ENCODE measurements at regions of chrX and their contacts with region 1.

Region 1: DNA sequence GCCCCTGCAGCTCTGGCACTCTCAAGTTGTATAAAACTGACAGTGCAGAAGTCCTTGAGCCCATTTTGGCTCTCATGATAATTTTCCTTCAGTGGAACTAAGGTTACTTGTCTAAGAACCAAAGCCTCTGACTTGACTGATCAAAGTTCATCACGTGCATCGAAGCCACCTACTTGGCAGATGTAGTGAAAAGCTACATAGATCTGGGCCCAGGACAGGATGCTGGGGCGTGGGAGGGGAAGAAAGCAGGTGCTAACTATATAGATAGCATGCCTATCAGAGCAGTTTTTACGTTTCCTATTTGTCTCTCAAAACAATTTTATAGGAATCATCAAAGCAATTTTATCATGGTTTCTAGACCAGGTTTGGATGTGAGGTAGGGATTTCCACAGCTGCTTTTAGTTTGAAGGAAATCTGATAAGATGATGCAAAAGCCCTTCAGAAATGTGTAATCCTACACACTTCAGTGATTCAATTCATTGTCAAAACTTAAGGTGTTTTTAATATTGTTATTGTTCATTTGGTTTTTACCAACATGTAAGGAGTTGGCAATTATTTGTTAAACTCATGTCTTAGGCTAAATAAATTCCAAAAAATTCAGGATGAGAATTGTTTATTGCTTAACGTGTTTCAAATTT is 1.2 kb upstream of the CD40LG start:
- DNase-seq: peak in 7 of 9 donors; percentile 49 to 76 (median 67)
- ATAC-seq: peak; percentile 88
- H3K4me3 ChIP-seq: no peak overlapping the region
- H3K4me3 Mint-ChIP-seq: peak overlapping the region; percentile 69 to 99 (median 96)
- H3K27ac ChIP-seq: peak overlapping the region; percentile 79
- H3K27ac Mint-ChIP-seq: peak overlapping the region; percentile 92 to 99 (median 95)
- H3K4me1 ChIP-seq: peaks cover 14 to 40% of the 10 kb centered on the region in 2 donors
- H3K4me1 Mint-ChIP-seq: peaks cover 23 to 53% (median 47%) of the 10 kb centered on the region in 7 donors
- H3K27me3 ChIP-seq: no peaks in the 10 kb centered on the region
- H3K27me3 Mint-ChIP-seq: no peaks in the 10 kb centered on the region

Region 2: DNA sequence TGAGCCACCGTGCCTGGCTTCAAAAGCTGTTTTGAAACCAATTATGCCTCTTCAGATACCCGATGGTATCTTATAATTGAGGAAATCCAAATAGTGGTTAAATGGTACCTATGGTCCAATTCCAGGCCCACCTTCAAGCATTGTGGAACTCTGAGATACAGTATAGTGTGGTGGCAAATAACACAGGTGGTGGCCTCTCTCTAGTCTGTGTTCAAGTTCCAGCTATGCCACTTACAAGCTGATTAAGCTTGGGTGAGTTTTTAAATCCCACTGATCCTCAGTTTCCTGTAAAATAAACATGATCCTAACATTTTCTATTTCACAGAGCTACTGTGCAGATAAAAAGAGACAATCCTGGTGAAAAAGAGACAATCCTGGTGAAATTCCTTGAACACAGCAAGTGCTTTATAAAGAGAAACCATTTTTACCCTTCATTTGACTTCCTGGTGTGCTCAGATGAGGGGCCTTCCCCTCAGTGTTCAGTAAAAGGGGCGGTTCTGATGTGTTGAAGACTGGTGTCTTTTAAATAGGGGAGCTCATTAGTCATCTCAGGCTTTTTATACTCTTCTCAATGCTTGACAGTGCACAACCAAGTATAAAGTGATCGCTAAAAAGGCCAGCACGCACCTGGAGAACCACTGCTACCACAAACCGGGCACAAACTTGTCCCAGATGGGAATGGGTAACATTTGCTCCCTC is 29.6 kb before region 1 on chrX:
- CTCF ChIA-PET with region 1: interaction called, 4 read pairs
- POLR2A ChIA-PET with region 1: interaction called, 14 read pairs
- intact Hi-C with region 1: no loop called
- DNase-seq: peak in 6 of 9 donors; percentile 22 to 60 (median 34)
- ATAC-seq: peak; percentile 85
- H3K4me3 ChIP-seq: peak overlapping the region; percentile 45
- H3K4me3 Mint-ChIP-seq: peak overlapping the region; percentile 30 to 73 (median 64)
- H3K27ac ChIP-seq: peak overlapping the region; percentile 60
- H3K27ac Mint-ChIP-seq: peak overlapping the region; percentile 63 to 93 (median 87)
- H3K4me1 ChIP-seq: peaks cover 18 to 50% of the 10 kb centered on the region in 2 donors
- H3K4me1 Mint-ChIP-seq: peaks cover 5 to 75% (median 64%) of the 10 kb centered on the region in 7 donors
- H3K27me3 ChIP-seq: no peaks in the 10 kb centered on the region
- H3K27me3 Mint-ChIP-seq: no peaks in the 10 kb centered on the region

Region 3: GRCh38 chrX:136626237-136626636 is 20.5 kb before region 1 on chrX:
- CTCF ChIA-PET with region 1: interaction called, 3 read pairs
- POLR2A ChIA-PET with region 1: interaction called, 86 read pairs
- intact Hi-C with region 1: loop called (anchors 2 kb)
- DNase-seq: no peak
- ATAC-seq: no peak
- H3K4me3 ChIP-seq: peak overlapping the region; percentile 18
- H3K4me3 Mint-ChIP-seq: peak overlapping the region in 8 of 10 donors; percentile 17 to 75 (median 58)
- H3K27ac ChIP-seq: peak overlapping the region; percentile 12
- H3K27ac Mint-ChIP-seq: peak overlapping the region; percentile 40 to 93 (median 85)
- H3K4me1 ChIP-seq: peaks cover 56 to 72% of the 10 kb centered on the region in 2 donors
- H3K4me1 Mint-ChIP-seq: peaks cover 30 to 97% (median 87%) of the 10 kb centered on the region in 7 donors
- H3K27me3 ChIP-seq: no peaks in the 10 kb centered on the region
- H3K27me3 Mint-ChIP-seq: no peaks in the 10 kb centered on the region

Region 4: GRCh38 chrX:136635235-136635634 is 11.5 kb before region 1 on chrX:
- CTCF ChIA-PET with region 1: interaction called, 5 read pairs
- POLR2A ChIA-PET with region 1: interaction called, 86 read pairs
- intact Hi-C with region 1: loop called (anchors 1 kb)
- DNase-seq: peak in 5 of 9 donors; percentile 49 to 68 (median 60)
- ATAC-seq: peak; percentile 80
- H3K4me3 ChIP-seq: peak overlapping the region; percentile 36
- H3K4me3 Mint-ChIP-seq: peak overlapping the region; percentile 68 to 84 (median 78)
- H3K27ac ChIP-seq: peak overlapping the region; percentile 53
- H3K27ac Mint-ChIP-seq: peak overlapping the region; percentile 80 to 94 (median 89)
- H3K4me1 ChIP-seq: peaks cover 62 to 88% of the 10 kb centered on the region in 2 donors
- H3K4me1 Mint-ChIP-seq: peaks cover 30 to 96% (median 83%) of the 10 kb centered on the region in 7 donors
- H3K27me3 ChIP-seq: no peaks in the 10 kb centered on the region
- H3K27me3 Mint-ChIP-seq: no peaks in the 10 kb centered on the region

Region 5: DNA sequence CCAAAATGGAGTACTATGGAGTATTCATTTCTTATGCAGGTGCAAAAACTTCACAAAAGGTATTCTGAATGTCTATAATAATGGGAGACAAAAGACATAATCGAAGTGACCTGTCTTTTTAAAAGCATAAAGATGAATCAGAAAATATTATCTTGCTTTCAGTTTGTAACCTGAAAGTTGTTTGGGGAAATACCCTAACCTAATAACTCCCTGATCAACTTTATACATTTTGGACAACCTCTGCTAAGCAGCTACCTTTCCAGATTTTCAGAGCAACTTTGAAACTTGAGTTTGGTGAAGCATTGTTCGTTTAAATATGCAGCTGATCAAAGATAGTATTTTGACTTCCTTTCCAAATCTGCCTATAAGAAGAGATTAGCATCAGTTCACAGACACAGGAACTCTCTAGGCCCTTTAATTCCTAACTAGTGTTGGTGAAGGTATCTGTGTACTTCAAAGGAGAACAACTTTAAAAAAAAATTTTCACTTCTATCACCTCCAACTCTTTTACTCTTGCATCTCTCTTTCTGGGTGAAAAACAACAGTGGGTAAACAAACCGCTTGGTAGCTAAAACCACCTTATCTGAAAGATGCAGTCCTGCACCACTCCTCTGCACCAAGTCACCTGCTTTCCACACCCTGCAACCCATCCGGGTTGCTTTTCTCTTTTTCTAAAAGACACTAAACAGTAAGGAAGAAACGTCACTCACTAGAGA is 27.7 kb after region 1 on chrX:
- CTCF ChIA-PET with region 1: no interaction called
- POLR2A ChIA-PET with region 1: interaction called, 14 read pairs
- intact Hi-C with region 1: loop called (anchors 1 to 2 kb)
- DNase-seq: peak in 7 of 9 donors; percentile 52 to 85 (median 72)
- ATAC-seq: peak; percentile 91
- H3K4me3 ChIP-seq: peak overlapping the region; percentile 16
- H3K4me3 Mint-ChIP-seq: peak overlapping the region; percentile 56 to 79 (median 72)
- H3K27ac ChIP-seq: peak overlapping the region; percentile 65
- H3K27ac Mint-ChIP-seq: peak overlapping the region; percentile 78 to 97 (median 93)
- H3K4me1 ChIP-seq: peaks cover 67 to 77% of the 10 kb centered on the region in 2 donors
- H3K4me1 Mint-ChIP-seq: peaks cover 36 to 98% (median 92%) of the 10 kb centered on the region in 7 donors
- H3K27me3 ChIP-seq: no peaks in the 10 kb centered on the region
- H3K27me3 Mint-ChIP-seq: no peaks in the 10 kb centered on the region

Region 6: GRCh38 chrX:136767104-136767941 is 120.6 kb after region 1 on chrX:
- CTCF ChIA-PET with region 1: no interaction called
- POLR2A ChIA-PET with region 1: no interaction called
- intact Hi-C with region 1: no loop called
- DNase-seq: peak; percentile 20 to 48 (median 41)
- ATAC-seq: peak; percentile 81
- H3K4me3 ChIP-seq: peak overlapping the region; percentile 61
- H3K4me3 Mint-ChIP-seq: peak overlapping the region; percentile 80 to 90 (median 82)
- H3K27ac ChIP-seq: peak overlapping the region; percentile 66
- H3K27ac Mint-ChIP-seq: peak overlapping the region; percentile 66 to 94 (median 87)
- H3K4me1 ChIP-seq: peaks cover 17 to 46% of the 10 kb centered on the region in 2 donors
- H3K4me1 Mint-ChIP-seq: peaks cover 27 to 81% (median 68%) of the 10 kb centered on the region in 7 donors
- H3K27me3 ChIP-seq: no peaks in the 10 kb centered on the region
- H3K27me3 Mint-ChIP-seq: no peaks in the 10 kb centered on the region

Region 7: DNA sequence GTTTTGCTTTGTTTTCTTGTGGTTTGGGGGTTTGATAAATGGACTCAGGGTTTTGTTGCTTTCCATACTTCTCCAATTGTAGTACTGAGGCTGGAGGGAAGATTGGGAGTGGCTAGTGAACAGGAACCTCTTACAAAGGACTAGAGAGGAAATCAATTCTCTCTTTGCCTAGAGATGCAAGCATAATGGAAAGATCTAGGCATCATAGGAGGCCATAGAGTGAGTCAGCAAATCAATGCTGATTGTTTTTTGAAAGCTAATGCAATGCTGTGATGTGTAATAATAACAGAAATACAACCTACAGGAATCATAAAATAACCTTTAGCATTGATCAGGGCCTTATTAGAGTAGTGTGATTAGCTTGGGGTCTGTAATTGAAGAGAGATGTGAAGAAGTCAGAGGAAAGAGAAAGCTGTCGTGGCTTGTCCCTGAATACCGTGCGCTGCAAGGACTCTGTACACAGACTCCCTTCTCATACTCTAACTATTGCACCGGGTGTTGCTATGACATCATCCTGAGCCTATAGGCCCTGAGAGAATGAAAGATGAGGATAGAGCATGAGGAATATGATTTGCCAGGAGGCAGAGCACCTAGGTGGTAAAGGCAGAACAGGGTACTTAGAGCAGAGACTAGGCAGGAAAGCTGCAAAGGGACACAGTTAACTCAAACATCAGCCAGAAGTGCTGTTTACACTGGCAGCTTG is 416.3 kb after region 1 on chrX:
- CTCF ChIA-PET with region 1: no interaction called
- POLR2A ChIA-PET with region 1: no interaction called
- intact Hi-C with region 1: no loop called
- DNase-seq: no peak
- ATAC-seq: no peak
- H3K4me3 ChIP-seq: no peak overlapping the region
- H3K4me3 Mint-ChIP-seq: no peak overlapping the region
- H3K27ac ChIP-seq: no peak overlapping the region
- H3K27ac Mint-ChIP-seq: no peak overlapping the region
- H3K4me1 ChIP-seq: no peaks in the 10 kb centered on the region
- H3K4me1 Mint-ChIP-seq: no peaks in the 10 kb centered on the region
- H3K27me3 ChIP-seq: no peaks in the 10 kb centered on the region
- H3K27me3 Mint-ChIP-seq: peaks cover 0 to 5% (median 0%) of the 10 kb centered on the region in 5 donors